ENCODE measurements at regions of chr16 and their contacts with region 1.

Region 1: GRCh38 chr16:16150117-16150877 is 73.0 kb downstream of the ABCC6 start:
- DNase-seq: peak; percentile 96
- H3K4me3 ChIP-seq: no peak overlapping the region
- H3K27ac ChIP-seq: peak overlapping the region; percentile 73 to 93 (median 86)
- H3K4me1 ChIP-seq: peaks cover 0 to 53% (median 35%) of the 10 kb centered on the region in 4 donors
- H3K27me3 ChIP-seq: no peaks in the 10 kb centered on the region
- CTCF ChIP-seq: no peak
- EP300 ChIP-seq: peak in 2 of 4 donors; percentile 13 to 68
- POLR2A ChIP-seq: no peak

Region 2: GRCh38 chr16:15457958-15458357 is 692.3 kb before region 1 on chr16:
- intact Hi-C with region 1: no loop called
- DNase-seq: no peak
- H3K4me3 ChIP-seq: no peak overlapping the region
- H3K27ac ChIP-seq: no peak overlapping the region
- H3K4me1 ChIP-seq: no peaks in the 10 kb centered on the region
- H3K27me3 ChIP-seq: no peaks in the 10 kb centered on the region
- CTCF ChIP-seq: no peak
- EP300 ChIP-seq: no peak
- POLR2A ChIP-seq: no peak

Region 3: GRCh38 chr16:16096121-16096857 is 54.0 kb before region 1 on chr16:
- intact Hi-C with region 1: no loop called
- DNase-seq: peak; percentile 92
- H3K4me3 ChIP-seq: no peak overlapping the region
- H3K27ac ChIP-seq: peak overlapping the region; percentile 81 to 92 (median 86)
- H3K4me1 ChIP-seq: peaks cover 0 to 86% (median 75%) of the 10 kb centered on the region in 4 donors
- H3K27me3 ChIP-seq: no peaks in the 10 kb centered on the region
- CTCF ChIP-seq: peak; percentile 29 to 47 (median 38)
- EP300 ChIP-seq: peak in 2 of 4 donors; percentile 76 to 83
- POLR2A ChIP-seq: no peak

Region 4: DNA sequence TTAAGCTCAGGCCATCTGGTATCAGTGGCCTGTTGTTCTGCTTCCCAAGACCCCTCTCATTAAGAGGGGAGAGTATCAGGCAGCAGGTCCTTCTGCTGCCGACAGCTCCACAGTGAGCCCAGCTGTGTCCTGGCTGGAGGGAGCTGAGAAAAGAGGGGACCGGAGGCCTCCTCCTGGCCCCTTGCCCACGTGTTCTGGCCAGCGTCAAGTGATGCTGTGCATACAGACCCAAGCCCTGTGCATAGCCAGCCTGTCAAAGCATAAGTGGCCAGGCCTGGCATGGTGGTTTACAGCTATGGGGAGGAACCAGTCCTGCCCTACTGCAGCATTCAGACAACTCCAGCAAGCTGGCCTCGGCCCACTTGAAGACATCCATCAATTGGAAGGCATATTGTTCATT is 25.0 kb after region 1 on chr16:
- intact Hi-C with region 1: loop called (anchors 2 kb)
- DNase-seq: peak; percentile 94
- H3K4me3 ChIP-seq: no peak overlapping the region
- H3K27ac ChIP-seq: peak overlapping the region in 3 of 4 donors; percentile 55 to 64 (median 64)
- H3K4me1 ChIP-seq: peaks cover 0 to 22% (median 12%) of the 10 kb centered on the region in 4 donors
- H3K27me3 ChIP-seq: no peaks in the 10 kb centered on the region
- CTCF ChIP-seq: no peak
- EP300 ChIP-seq: peak in 1 of 4 donors; percentile 59
- POLR2A ChIP-seq: no peak

Region 5: GRCh38 chr16:17070882-17071592 is 920.7 kb after region 1 on chr16:
- intact Hi-C with region 1: no loop called
- DNase-seq: no peak
- H3K4me3 ChIP-seq: no peak overlapping the region
- H3K27ac ChIP-seq: no peak overlapping the region
- H3K4me1 ChIP-seq: peaks cover 0 to 8% (median 0%) of the 10 kb centered on the region in 4 donors
- H3K27me3 ChIP-seq: no peaks in the 10 kb centered on the region
- CTCF ChIP-seq: no peak
- EP300 ChIP-seq: no peak
- POLR2A ChIP-seq: no peak